GM12878 (cell line): ENCODE measurements at regions of chr7 and their contacts with region 1.

Region 1: DNA sequence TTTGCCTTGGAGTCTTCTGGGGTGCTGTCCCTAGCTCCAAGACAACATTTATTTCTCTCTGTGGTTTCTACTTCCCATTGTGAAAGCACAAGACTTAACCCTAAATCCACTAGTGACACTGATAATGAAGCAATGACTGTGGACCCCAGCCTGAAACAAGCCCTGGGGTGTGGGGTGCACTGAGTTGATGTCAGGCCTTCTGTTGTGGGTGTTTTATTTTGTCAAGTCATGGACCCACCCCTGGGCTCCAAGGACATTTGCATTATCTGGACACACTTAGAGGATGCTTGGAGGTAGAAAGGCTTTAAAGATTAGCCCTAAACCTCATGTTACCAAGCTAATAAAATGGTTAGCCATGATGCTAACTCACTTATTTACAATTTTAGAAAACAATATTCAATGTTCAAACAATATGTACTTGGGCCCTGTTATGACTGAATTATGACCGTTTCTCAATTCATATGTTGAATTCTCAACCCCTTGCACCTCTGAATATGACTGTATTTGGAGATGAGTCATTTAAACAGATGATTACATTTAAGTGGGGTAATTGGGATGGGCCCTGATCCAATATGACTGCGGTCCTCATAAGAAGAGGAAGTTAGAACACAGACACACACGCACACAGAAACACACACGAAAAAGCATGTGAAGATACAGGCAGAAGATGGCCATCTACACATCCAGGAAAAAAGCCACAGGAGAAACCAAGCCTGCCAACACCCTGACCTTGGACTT is 137.2 kb upstream of the IGFBP3 start:
- DNase-seq: no peak
- ATAC-seq: peak; percentile 85
- H3K4me3 ChIP-seq: no peak overlapping the region
- H3K27ac ChIP-seq: no peak overlapping the region
- H3K4me1 ChIP-seq: no peaks in the 10 kb centered on the region
- H3K27me3 ChIP-seq: no peaks in the 10 kb centered on the region
- CTCF ChIP-seq: no peak
- EP300 ChIP-seq: peak; percentile 77 to 82; a peak in 3 of 4 replicates
- POLR2A ChIP-seq: no peak
- RAD21 ChIP-seq: no peak

Region 2: DNA sequence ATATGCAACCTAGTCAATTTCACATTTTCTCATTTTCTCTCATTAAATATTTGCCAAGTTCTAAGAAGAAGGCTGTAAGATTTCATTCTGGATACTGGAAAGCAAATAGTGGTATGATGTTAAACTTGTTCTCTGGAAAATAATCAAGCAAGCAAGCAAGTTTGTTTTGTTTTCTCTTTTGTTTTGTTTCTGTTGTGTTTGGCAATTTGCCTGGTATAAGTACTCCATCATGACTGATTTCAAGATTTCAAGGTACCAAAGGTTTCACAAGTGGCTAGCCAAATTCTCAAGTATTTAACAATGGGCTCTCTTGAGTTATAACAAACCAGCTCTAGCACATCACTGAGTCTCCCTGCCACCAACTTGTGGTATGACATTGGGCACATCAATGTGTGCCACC is 14.4 kb after region 1 on chr7:
- CTCF ChIA-PET with region 1: interaction called, 5 read pairs
- POLR2A ChIA-PET with region 1: interaction called, 3 read pairs
- RAD21 ChIA-PET with region 1: interaction called, 3 read pairs
- SMC1A ChIA-PET with region 1: interaction called, 22 read pairs
- in situ Hi-C with region 1: no loop called
- intact Hi-C with region 1: no loop called
- DNase-seq: peak; percentile 13
- ATAC-seq: peak; percentile 82
- H3K4me3 ChIP-seq: no peak overlapping the region
- H3K27ac ChIP-seq: no peak overlapping the region
- H3K4me1 ChIP-seq: no peaks in the 10 kb centered on the region
- H3K27me3 ChIP-seq: no peaks in the 10 kb centered on the region
- CTCF ChIP-seq: no peak
- EP300 ChIP-seq: no peak
- POLR2A ChIP-seq: no peak
- RAD21 ChIP-seq: no peak

Region 3: GRCh38 chr7:46139079-46139478 is 80.8 kb after region 1 on chr7:
- CTCF ChIA-PET with region 1: interaction called, 3 read pairs
- POLR2A ChIA-PET with region 1: no interaction called
- RAD21 ChIA-PET with region 1: interaction called, 5 read pairs
- SMC1A ChIA-PET with region 1: interaction called, 11 read pairs
- in situ Hi-C with region 1: no loop called
- intact Hi-C with region 1: loop called (anchors 5 kb)
- DNase-seq: peak; percentile 48
- ATAC-seq: peak; percentile 95
- H3K4me3 ChIP-seq: no peak overlapping the region
- H3K27ac ChIP-seq: no peak overlapping the region
- H3K4me1 ChIP-seq: no peaks in the 10 kb centered on the region
- H3K27me3 ChIP-seq: no peaks in the 10 kb centered on the region
- CTCF ChIP-seq: no peak
- EP300 ChIP-seq: peak; percentile 76 to 91
- POLR2A ChIP-seq: no peak
- RAD21 ChIP-seq: no peak

Region 4: DNA sequence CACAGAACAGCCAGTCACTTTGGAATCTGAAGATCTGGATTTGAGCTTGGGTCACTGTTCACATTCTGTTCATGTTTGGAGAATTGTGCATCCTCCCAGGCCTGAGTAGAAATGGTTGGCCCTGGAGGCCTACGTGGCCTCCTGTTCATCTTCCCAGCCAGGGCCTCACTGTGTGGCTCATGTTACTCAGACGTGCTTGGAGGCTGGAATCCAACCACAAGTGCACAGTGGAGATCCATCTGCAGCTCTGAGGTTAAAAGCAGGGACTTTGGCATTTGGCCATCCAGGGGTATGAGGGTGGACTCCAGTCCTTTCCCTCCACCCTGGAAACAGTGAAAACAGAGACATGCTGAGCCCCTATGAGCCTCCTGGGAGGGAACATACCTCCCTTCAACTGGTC is 571.8 kb after region 1 on chr7:
- CTCF ChIA-PET with region 1: no interaction called
- POLR2A ChIA-PET with region 1: no interaction called
- RAD21 ChIA-PET with region 1: no interaction called
- SMC1A ChIA-PET with region 1: no interaction called
- in situ Hi-C with region 1: no loop called
- intact Hi-C with region 1: no loop called
- DNase-seq: no peak
- ATAC-seq: no peak
- H3K4me3 ChIP-seq: no peak overlapping the region
- H3K27ac ChIP-seq: no peak overlapping the region
- H3K4me1 ChIP-seq: no peaks in the 10 kb centered on the region
- H3K27me3 ChIP-seq: no peaks in the 10 kb centered on the region
- CTCF ChIP-seq: no peak
- EP300 ChIP-seq: no peak
- POLR2A ChIP-seq: no peak
- RAD21 ChIP-seq: no peak

Region 5: DNA sequence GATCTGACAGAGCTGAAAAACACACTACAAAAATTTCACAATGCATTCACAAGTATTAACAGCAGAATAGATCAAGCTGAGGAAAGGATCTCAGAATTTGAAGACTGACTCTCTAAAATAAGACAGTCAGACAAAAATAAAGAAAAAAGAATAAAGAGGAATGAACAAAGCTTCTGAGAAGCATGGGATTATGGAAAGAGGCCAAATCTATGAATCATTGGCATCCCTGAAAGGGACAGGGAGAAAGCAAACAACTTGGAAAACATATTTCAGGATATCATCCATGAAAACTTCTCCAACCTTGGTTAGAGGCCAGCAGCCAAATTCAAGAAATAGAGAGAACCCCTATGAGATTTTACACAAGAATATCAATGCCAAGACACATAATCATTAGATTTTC is 667.6 kb after region 1 on chr7:
- CTCF ChIA-PET with region 1: no interaction called
- POLR2A ChIA-PET with region 1: no interaction called
- RAD21 ChIA-PET with region 1: no interaction called
- SMC1A ChIA-PET with region 1: no interaction called
- in situ Hi-C with region 1: no loop called
- intact Hi-C with region 1: no loop called
- DNase-seq: no peak
- ATAC-seq: no peak
- H3K4me3 ChIP-seq: no peak overlapping the region
- H3K27ac ChIP-seq: no peak overlapping the region
- H3K4me1 ChIP-seq: no peaks in the 10 kb centered on the region
- H3K27me3 ChIP-seq: no peaks in the 10 kb centered on the region
- CTCF ChIP-seq: no peak
- EP300 ChIP-seq: no peak
- POLR2A ChIP-seq: no peak
- RAD21 ChIP-seq: no peak